ENCODE measurements at regions of chr10 and their contacts with region 1.

Region 1: GRCh38 chr10:43396928-43397624 is 11.9 kb downstream of the HNRNPF start:
- DNase-seq: peak; percentile 94
- H3K4me3 ChIP-seq: peak overlapping the region; percentile 65 to 85 (median 80)
- H3K27ac ChIP-seq: peak overlapping the region; percentile 97 to 99 (median 98)
- H3K4me1 ChIP-seq: peaks cover 0 to 58% (median 51%) of the 10 kb centered on the region in 4 donors
- H3K27me3 ChIP-seq: no peaks in the 10 kb centered on the region
- CTCF ChIP-seq: no peak
- EP300 ChIP-seq: peak in 1 of 4 donors; percentile 20
- POLR2A ChIP-seq: no peak

Region 2: DNA sequence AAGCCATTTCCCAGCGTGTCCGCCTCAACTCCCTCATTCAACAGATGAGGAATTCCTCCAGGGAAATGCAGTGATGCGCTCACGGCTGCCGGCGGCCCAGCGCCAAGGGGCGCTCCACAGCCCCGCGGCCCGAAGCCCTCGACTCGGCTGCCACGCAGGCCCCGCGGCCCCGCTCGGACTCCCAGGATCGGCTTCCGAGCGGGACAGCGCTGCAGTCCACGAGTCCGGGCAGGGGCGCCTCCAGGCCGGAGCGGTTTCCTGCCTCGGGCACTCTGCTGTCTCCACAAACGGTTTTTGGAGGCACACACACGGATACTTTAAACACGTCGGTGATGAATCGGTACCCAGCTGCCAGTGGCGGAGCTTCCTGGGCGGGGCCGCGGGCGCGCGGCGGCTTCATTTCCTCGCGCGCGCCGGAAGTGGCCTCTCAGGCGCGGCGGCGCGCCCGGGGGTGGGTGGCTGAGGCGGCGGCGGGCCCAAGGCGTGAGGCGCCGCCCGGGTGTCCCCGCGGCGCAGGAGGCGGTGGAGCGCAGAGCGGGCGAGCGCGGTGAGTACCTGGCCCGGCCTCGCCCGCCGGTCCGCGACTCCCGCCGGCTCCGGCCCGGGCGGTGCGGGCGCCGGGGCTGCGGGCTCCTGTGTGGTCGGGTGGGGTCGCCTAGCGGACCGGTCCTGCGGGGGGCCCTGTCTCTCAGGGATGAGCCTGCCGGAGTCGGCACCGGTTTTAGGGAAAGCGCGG is 258.9 kb before region 1 on chr10 and contains the start of gene CSGALNACT2:
- intact Hi-C with region 1: loop called (anchors 10 kb)
- DNase-seq: peak; percentile 92
- H3K4me3 ChIP-seq: peak within 1 kb of the TSS; percentile 73 to 94 (median 87)
- H3K27ac ChIP-seq: peak within 1 kb of the TSS; percentile 97 to 99 (median 98)
- H3K4me1 ChIP-seq: peaks cover 0 to 31% (median 24%) of the 10 kb centered on the region in 4 donors
- H3K27me3 ChIP-seq: no peaks in the 10 kb centered on the region
- CTCF ChIP-seq: no peak
- EP300 ChIP-seq: no peak
- POLR2A ChIP-seq: peak; percentile 30 to 34
- total RNA-seq, gene CSGALNACT2: 25.0 to 37.1 (median 30.9) TPM

Region 3: DNA sequence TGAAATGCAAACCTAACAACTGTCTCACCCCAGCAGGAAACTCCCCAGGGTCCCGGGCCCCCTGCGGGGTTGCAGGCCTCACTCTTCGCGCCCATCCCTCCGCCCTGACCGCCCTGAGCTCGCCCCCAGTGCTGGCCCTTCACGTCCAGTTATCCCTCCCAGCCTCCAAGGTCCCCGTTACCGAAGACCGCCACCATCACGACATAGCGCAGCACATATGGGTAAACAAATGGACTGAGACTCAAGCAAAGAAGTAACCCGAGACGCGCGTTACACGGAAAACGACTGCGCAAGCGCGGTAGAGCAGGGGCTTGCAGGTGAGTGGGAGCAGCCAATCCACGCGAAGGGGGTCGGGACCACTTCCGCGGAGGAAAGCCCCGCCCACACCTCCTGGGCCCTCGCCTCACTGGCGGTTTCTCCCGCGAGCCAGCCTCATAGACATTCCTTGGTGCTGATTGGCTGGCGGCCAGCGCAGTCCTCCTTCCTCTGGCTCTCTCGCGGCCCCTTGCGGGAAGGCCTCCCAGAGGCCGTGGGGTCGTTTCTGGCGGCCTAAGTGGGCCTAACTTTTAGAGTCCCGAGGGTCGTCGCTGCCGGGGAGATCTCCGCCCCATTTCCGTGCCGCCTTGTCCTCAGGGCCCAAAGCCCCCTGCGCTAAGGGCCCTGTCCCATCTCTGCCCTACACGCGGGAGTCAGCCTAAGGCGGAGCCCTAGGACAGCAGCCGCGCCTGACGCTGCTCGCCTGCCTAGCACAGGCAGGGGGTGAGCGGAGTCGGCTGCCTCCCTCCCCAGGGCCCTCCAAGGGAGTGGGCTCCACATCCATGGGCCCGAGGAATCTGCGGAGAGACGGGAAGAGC is 34.9 kb before region 1 on chr10:
- intact Hi-C with region 1: loop called (anchors 5 kb)
- DNase-seq: peak; percentile 97
- H3K4me3 ChIP-seq: peak overlapping the region; percentile 27 to 62 (median 52)
- H3K27ac ChIP-seq: peak overlapping the region; percentile 63 to 74 (median 69)
- H3K4me1 ChIP-seq: peaks cover 0 to 14% (median 12%) of the 10 kb centered on the region in 4 donors
- H3K27me3 ChIP-seq: no peaks in the 10 kb centered on the region
- CTCF ChIP-seq: peak; percentile 20 to 51 (median 32)
- EP300 ChIP-seq: no peak
- POLR2A ChIP-seq: peak in 1 of 2 donors; percentile 5

Region 4: DNA sequence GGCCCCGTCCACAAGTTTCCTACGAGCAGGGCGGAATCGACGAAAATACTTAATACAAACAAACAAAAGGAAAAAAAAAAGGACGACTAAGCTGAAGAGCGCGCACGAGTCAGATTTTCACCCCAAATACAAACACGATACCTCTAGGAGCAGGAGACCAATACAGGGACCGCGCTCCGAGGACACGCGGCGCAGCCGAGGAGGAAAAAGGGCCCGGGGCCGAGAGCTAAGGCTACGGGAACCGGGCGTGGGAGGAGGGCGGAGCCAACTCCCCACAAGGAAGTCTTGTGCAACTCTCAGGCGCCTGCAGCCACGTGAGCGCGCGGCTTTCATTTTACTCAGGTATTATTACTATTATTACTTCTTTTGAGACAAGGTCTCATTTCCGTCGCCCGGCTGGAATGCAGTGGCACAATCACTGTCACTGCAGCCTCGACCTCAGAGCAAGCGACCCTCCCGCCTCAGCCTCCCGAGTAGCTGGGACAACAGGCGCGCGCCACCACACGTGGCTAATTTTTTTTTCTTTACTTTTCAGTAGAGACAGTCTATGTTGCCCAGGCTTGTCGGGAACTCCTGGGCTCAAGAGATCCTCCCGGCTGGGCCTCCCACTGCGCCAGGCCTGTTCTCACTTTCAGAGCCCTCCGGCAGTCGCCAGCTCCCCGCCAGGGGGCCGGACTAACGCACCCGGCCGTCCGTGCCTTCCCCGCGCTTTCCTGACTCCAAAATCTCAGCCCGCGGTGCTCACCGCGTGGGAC is 10.7 kb after region 1 on chr10:
- intact Hi-C with region 1: loop called (anchors 1 kb)
- DNase-seq: peak; percentile 98
- H3K4me3 ChIP-seq: peak overlapping the region; percentile 64 to 91 (median 80)
- H3K27ac ChIP-seq: peak overlapping the region; percentile 94 to 99 (median 99)
- H3K4me1 ChIP-seq: peaks cover 0 to 52% (median 48%) of the 10 kb centered on the region in 4 donors
- H3K27me3 ChIP-seq: no peaks in the 10 kb centered on the region
- CTCF ChIP-seq: peak; percentile 10 to 39 (median 36)
- EP300 ChIP-seq: peak in 1 of 4 donors; percentile 69
- POLR2A ChIP-seq: peak; percentile 56 to 62

Region 5: DNA sequence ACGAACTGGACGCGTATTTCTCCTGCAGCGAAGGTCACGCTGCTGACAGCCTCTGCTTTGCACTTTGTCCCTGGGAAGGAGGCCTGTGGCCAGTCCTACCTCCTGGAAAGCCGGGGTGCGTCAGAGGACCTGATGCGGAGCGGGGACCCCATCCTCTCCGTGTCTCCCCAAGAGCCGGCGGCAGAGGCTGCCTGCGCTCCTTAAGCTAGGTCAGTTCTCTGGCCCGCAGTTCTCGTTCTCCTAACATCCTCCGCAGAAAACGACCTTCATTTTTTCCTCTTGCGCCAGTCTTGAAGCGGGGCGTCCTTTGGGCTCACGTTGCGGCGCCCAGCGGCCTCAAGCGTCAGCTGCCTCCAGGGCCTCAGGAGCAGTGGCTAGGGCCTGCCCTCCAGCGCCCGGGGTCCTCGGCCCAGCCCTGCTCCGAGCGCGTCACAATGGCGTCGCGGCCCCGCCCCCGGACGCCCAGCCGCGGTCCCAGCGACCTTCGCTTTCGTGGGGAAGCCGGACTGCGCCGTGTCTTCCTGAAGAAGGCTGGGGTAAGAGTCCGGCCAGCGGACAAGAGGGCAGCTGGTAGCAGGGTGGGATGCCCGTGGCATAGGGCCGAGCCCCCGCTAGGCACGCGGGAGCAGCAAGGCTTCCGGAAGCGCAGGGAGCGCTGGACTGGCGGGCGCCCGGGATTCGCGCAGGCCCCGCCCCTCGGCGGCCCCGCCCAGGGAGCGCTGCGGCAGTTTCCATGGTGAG is 39.5 kb after region 1 on chr10 and contains the start of gene ZNF487:
- intact Hi-C with region 1: loop called (anchors 2 kb)
- DNase-seq: peak; percentile 94
- H3K4me3 ChIP-seq: peak within 1 kb of the TSS; percentile 52 to 79 (median 69)
- H3K27ac ChIP-seq: peak within 1 kb of the TSS; percentile 86 to 99 (median 97)
- H3K4me1 ChIP-seq: peaks cover 0 to 19% (median 14%) of the 10 kb centered on the region in 4 donors
- H3K27me3 ChIP-seq: no peaks in the 10 kb centered on the region
- CTCF ChIP-seq: no peak
- EP300 ChIP-seq: peak in 2 of 4 donors; percentile 3 to 42
- POLR2A ChIP-seq: peak; percentile 80 to 87
- total RNA-seq, gene ZNF487: 6.1 to 21.6 (median 13.3) TPM

Region 6: GRCh38 chr10:43574001-43574892 is 177.2 kb after region 1 on chr10 and contains the start of gene ZNF239:
- intact Hi-C with region 1: loop called (anchors 10 kb)
- DNase-seq: peak; percentile 95
- H3K4me3 ChIP-seq: peak within 1 kb of the TSS; percentile 54 to 69 (median 64)
- H3K27ac ChIP-seq: peak within 1 kb of the TSS; percentile 68 to 81 (median 74)
- H3K4me1 ChIP-seq: peaks cover 0 to 19% (median 13%) of the 10 kb centered on the region in 4 donors
- H3K27me3 ChIP-seq: no peaks in the 10 kb centered on the region
- CTCF ChIP-seq: no peak
- EP300 ChIP-seq: no peak
- POLR2A ChIP-seq: no peak
- total RNA-seq, gene ZNF239: 4.1 to 6.2 (median 5.4) TPM